Posterior vena cava (tissue), 2 donors: ENCODE measurements at regions of chr2 and their contacts with region 1.

Region 1: DNA sequence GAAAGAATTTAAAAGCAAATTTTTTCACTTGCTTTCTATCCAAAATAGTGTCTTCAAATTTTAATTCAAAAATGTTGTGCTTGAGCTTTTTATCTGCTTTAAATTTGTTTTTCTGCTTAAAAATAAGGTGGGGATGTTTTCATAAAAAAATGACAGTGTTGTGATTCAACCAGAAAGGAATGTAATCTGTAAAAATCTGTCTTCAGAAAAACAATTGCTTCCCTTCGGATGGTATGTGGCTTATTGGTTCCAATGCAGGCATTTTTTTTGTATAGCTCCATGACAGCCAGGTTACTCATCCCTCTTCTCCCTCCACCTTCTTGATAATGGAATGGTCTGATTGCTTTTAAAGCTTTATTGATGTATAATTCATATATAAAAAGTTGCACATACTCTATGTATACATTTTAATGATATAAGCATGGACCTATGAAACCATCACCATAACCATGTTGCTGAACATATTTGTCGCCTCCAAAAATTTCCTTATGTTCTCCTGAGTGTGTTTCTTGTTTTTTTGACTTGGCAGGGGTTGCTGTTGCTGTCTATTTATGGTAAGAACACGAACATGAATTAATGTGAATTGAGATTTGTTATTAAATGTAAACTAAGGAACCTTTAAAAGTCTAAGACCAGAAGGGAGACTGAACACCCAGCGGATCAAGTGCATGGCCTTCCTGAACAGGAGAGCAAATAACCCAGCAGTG is 363.7 kb upstream of the SPHKAP start:
- DNase-seq: no peak

Region 2: DNA sequence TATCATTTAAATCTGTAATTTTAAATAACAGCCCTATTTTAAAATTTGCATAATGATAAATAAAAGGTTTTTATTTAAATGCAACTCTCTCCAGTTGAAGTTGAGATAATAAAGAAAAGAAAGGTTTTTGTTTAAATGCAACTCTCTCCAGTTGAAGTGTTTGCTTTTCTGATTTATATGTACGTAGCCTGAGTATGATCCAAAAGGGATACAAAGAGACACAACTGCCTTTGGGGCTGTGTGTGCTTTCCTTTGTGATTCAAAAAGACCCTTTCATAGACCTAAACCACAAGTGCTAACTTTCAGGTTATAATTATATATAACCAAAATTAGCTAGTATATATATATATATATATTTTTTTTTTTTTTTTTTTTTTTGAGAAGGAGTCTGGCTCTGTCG is 1296.3 kb before region 1 on chr2:
- intact Hi-C with region 1: loop called in 1 of 2 experiments (anchors 10 kb)
- DNase-seq: no peak